ENCODE measurements at regions of chr3 and their contacts with region 1.

Region 1: GRCh38 chr3:185942907-185943759 is 5.3 kb upstream of the TRA2B start:
- DNase-seq: peak; percentile 81
- H3K4me3 ChIP-seq: no peak overlapping the region
- H3K27ac ChIP-seq: no peak overlapping the region
- H3K4me1 ChIP-seq: peaks cover 21% of the 10 kb centered on the region
- H3K27me3 ChIP-seq: peaks cover 2% of the 10 kb centered on the region
- CTCF ChIP-seq: peak; percentile 97 to 99

Region 2: DNA sequence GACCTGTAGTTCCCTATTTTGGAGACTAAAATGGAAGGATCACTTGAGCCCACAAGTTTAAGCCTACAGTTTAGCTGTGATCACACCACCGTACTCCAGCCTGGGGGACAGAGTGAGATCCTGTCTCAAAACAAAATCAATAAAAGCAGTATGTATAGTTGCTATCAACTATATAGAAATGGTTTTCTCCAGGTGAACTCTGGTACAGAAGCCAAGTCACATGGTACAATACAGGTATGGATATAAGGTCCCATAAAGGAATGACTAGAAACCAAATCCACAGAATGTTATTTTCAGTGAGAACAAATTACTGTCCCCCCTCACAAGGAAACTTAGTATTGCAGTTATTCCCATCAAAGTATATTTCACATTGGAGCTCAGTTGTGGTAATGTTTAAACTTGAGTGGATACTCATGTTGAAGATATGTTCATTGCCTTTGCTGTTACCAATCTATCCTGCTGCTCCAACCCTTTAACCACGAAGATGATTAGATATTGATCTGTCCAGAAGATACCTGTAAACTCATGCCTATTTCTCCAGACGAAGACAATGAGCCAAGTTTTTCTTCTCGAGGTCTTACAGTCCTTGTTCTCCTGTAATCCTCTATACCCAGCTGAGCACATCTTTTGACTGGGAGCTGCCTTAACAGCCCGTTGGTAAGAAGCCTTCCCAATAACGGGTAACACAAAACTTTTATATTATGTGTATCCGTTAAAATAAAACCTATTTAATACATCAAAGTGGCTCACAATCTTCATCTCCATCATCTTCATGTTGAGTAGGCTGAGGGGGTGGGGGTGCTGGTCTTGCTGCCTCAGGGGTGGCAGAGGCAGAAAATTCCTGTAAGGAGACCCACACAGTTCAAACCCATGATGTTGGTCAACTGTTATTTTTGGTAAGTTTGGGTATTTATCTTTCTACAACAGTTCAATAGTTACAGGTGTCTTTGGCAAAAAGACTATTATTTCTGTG is 29.9 kb before region 1 on chr3:
- CTCF ChIA-PET with region 1: no interaction called
- dilution Hi-C with region 1: no loop called
- in situ Hi-C with region 1: no loop called
- intact Hi-C with region 1: no loop called
- DNase-seq: no peak
- H3K4me3 ChIP-seq: no peak overlapping the region
- H3K27ac ChIP-seq: no peak overlapping the region
- H3K4me1 ChIP-seq: no peaks in the 10 kb centered on the region
- H3K27me3 ChIP-seq: no peaks in the 10 kb centered on the region
- CTCF ChIP-seq: no peak

Region 3: DNA sequence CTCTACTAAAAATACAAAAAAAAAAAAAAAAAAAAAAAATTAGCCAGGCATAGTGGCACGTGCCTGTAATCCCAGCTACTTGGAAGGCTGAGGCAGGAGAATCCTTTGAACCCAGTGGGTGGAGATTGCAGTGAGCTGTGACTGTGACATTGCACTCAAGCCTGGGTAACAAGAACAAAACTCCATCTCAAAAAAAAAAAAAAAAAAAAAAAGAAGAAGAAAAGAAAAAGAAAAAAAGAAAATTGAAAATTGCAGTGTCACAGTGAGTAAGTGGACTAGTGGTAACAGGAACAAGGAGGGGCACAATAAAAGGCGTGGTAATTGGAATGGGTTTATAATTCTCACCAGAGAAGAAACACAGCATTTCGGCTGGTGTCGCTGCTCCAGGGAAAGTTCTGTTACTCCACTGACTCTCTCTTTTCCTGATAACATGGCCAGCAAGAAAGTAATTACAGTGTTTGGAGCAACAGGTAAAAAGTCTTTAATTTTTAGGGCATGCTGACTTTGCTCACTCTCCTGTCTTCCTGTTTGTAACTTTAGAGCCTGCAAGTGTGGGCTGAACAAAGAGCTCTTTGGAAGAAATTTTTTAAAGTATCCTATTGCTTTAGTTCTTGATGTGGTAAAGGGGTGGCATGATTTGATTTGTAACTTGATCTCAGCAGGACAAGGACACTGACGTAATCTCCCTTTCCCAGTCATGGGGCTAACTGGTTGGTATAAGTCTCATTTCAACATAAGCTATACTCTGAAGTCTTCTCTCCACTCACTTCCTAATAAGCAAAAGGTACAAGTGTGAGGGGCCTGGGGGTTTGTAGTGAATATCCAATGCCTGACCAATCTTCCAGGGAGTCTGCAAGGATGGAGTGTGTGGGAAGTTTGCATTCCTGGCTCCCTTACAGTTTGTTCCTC is 16.7 kb after region 1 on chr3:
- CTCF ChIA-PET with region 1: interaction called, 28 read pairs
- dilution Hi-C with region 1: no loop called
- in situ Hi-C with region 1: no loop called
- intact Hi-C with region 1: no loop called
- DNase-seq: peak; percentile 74
- H3K4me3 ChIP-seq: peak overlapping the region; percentile 34 to 56 (median 49)
- H3K27ac ChIP-seq: peak overlapping the region; percentile 93
- H3K4me1 ChIP-seq: peaks cover 22% of the 10 kb centered on the region
- H3K27me3 ChIP-seq: no peaks in the 10 kb centered on the region
- CTCF ChIP-seq: no peak

Measured in mammary epithelial cell (primary cell).